Right ventricle myocardium inferior (tissue), 1 donor: ENCODE measurements at regions of chrX and their contacts with region 1.

Region 1: GRCh38 chrX:67574696-67575095 is 30.9 kb downstream of the AR start:
- DNase-seq: no peak
- ATAC-seq: no peak

Region 2: GRCh38 chrX:67718926-67719325 is 144.2 kb after region 1 on chrX:
- intact Hi-C with region 1: loop called (anchors 5 kb)
- DNase-seq: no peak
- ATAC-seq: peak; percentile 89